ENCODE measurements at regions of chr1 and their contacts with region 1.

Region 1: DNA sequence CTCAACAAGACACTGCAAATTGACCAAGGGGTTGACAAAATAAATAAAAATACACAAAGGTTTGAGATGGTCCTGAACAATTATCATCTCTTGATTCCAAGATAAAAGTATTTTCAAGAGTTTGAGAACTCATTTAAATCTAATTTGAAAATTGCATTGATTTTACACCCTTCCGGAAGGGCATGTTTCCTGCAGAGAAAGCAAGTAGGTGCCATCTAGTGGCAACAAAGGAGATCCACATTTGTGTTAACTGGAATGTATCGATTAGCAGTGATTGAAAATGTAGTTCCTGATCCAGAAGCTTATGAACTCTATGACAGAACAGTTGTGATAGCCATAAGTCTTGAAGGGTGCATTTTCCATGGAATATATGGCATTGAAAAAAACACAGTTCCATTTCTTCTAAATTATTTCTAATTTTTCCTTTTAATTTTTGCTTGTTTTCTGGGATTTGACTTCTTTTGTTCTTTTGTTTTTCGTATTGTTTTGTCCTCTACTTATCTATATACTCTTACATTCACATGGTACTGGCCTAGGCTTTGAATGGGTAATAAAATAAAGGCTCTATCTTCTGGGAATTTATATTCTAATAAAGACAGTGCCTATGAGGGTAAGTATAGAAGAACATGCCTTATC is 143.7 kb downstream of the DNM3 start:
- DNase-seq: peak; percentile 35

Region 2: DNA sequence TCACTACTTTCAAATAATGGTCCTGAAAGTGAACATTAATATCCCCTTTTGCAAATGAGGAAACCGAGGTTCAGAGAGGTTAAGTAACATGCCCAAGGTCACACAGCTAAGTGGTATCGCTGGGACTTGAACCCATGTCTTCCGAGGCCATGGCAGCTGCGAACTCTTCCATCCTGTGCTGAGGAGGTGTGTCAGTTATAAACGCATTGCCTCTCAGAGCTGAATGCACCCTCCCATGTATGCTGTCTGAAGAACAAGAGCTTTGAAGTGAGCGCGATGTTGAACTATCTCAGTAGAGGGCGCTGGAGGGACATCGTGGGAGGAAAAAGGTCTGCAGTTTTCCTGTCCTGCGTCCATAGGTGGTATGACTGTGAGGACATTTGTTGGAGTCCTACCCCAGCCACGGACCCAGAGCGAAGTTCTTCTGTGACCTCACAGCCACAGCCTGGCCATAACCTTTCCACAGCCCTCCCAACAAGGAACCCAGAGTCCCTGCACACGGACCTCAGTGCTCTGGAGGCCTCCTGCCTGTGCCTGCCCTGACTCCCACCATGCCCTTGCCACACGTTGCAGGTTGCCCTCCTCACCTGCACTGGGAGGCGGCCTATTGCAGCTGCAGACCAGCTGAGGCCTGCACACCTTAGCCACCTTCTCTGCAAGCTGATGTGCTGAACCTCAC is 340.0 kb before region 1 on chr1:
- in situ Hi-C with region 1: loop called (anchors 25 kb)
- DNase-seq: peak; percentile 93

Region 3: DNA sequence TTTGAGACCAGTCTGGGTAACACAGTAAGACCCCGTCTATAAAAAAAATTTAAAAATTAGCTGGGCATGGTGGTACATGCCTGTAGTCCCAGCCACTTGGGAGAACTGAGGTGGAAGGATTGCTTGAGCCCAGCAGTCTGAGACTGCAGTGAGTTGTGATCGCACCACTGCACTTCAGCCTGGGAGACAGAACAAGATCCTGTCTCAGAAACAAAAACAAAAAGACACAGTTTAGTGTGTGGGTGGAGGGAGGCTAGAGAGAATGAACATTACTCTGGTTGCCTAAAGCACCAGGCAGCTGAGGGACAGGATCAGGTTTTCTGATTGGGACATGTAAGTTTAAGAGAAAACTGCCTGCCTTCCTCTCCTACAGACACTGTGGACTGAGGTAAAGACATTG is 285.4 kb before region 1 on chr1:
- in situ Hi-C with region 1: no loop called
- DNase-seq: no peak

Region 4: GRCh38 chr1:171801487-171801891 is 183.5 kb before region 1 on chr1:
- in situ Hi-C with region 1: loop called (anchors 25 kb)
- DNase-seq: peak; percentile 66

Region 5: GRCh38 chr1:172167796-172168596 is 183.0 kb after region 1 on chr1:
- in situ Hi-C with region 1: no loop called
- DNase-seq: no peak